Activated naive CD4-positive, alpha-beta T cell treated with anti-CD3 and anti-CD28 coated beads, Interleukin-2, amount 10 ng/mL, durations not matched to agents 7 days and 5 days (primary cell): ENCODE measurements at regions of chr12 and their contacts with region 1.

Region 1: GRCh38 chr12:62435303-62436163 is 31.1 kb upstream of the MON2 start:
- DNase-seq: peak; percentile 60
- H3K4me3 Mint-ChIP-seq: peak overlapping the region; percentile 73
- H3K27ac Mint-ChIP-seq: no peak overlapping the region
- H3K4me1 Mint-ChIP-seq: peaks cover 21% of the 10 kb centered on the region
- H3K27me3 Mint-ChIP-seq: peaks cover 42% of the 10 kb centered on the region

Region 2: GRCh38 chr12:62192180-62192902 is 243.2 kb before region 1 on chr12:
- CTCF ChIA-PET with region 1: no interaction called
- DNase-seq: peak; percentile 68
- H3K4me3 Mint-ChIP-seq: peak overlapping the region; percentile 71
- H3K27ac Mint-ChIP-seq: no peak overlapping the region
- H3K4me1 Mint-ChIP-seq: peaks cover 30% of the 10 kb centered on the region
- H3K27me3 Mint-ChIP-seq: peaks cover 43% of the 10 kb centered on the region

Region 3: GRCh38 chr12:62466594-62467491 is 31.3 kb after region 1 on chr12 and contains the start of gene MON2:
- CTCF ChIA-PET with region 1: interaction called, 12 read pairs
- DNase-seq: peak; percentile 90
- H3K4me3 Mint-ChIP-seq: peak within 1 kb of the TSS; percentile 82
- H3K27ac Mint-ChIP-seq: peak within 1 kb of the TSS; percentile 93
- H3K4me1 Mint-ChIP-seq: peaks cover 24% of the 10 kb centered on the region
- H3K27me3 Mint-ChIP-seq: peaks cover 9% of the 10 kb centered on the region

Region 4: GRCh38 chr12:62813031-62813829 is 377.7 kb after region 1 on chr12:
- CTCF ChIA-PET with region 1: interaction called, 10 read pairs
- DNase-seq: peak; percentile 49
- H3K4me3 Mint-ChIP-seq: no peak overlapping the region
- H3K27ac Mint-ChIP-seq: no peak overlapping the region
- H3K4me1 Mint-ChIP-seq: peaks cover 13% of the 10 kb centered on the region
- H3K27me3 Mint-ChIP-seq: peaks cover 14% of the 10 kb centered on the region